ENCODE measurements at regions of chr6 and their contacts with region 1.

Region 1: DNA sequence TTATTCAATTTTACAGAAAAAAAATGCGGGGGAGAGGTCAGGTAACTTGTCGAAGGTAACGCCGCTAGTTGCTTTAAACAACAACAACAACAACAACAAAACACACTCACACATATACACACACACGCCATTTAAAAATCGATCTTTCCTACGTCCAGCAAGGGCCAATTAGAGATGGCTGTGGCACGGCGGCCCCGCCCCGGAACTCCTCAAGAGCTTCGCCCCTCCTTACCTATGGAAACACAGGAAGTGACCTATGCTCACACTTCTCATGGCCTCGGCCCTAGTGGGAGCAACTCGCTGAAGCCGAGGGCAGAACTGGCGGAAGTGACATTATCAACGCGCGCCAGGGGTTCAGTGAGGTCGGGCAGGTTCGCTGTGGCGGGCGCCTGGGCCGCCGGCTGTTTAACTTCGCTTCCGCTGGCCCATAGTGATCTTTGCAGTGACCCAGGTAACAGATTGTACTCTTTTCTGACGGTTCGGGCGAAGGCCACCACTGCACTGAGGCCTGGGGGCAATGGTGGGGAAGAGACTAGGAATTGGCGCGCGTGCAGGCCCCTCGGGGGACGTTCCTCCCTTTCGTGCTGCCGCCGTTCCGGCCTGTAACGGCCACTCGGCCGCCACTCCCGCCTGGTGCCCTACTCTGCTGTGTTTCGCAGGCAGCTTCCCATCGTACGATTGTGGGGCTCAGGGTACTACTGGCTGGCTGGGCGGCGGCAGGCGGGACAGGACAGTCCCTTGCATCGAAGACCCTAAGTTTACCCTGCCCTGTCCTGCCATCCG is at the start of gene TBP:
- DNase-seq: peak; percentile 96 to 99 (median 97)
- H3K4me3 ChIP-seq: peak within 1 kb of the TSS; percentile 63 to 85
- H3K4me3 Mint-ChIP-seq: no peak within 1 kb of the TSS
- H3K27ac ChIP-seq: peak within 1 kb of the TSS; percentile 94
- H3K27ac Mint-ChIP-seq: no peak within 1 kb of the TSS
- H3K4me1 ChIP-seq: peaks cover 53% of the 10 kb centered on the region
- H3K4me1 Mint-ChIP-seq: peaks cover 10 to 37% (median 22%) of the 10 kb centered on the region in 4 donors
- H3K27me3 ChIP-seq: no peaks in the 10 kb centered on the region
- H3K27me3 Mint-ChIP-seq: no peaks in the 10 kb centered on the region
- total RNA-seq, gene TBP: 27.2 to 27.5 TPM

Region 2: GRCh38 chr6:169723200-169723909 is 830.8 kb before region 1 on chr6:
- CTCF ChIA-PET with region 1: no interaction called
- POLR2A ChIA-PET with region 1: interaction called, 23 read pairs
- intact Hi-C with region 1: loop called (anchors 1 kb)
- DNase-seq: peak; percentile 74 to 79 (median 76)
- H3K4me3 ChIP-seq: peak overlapping the region; percentile 76 to 90
- H3K4me3 Mint-ChIP-seq: peak overlapping the region; percentile 89 to 100 (median 96)
- H3K27ac ChIP-seq: peak overlapping the region; percentile 85
- H3K27ac Mint-ChIP-seq: peak overlapping the region; percentile 93 to 99 (median 96)
- H3K4me1 ChIP-seq: peaks cover 49% of the 10 kb centered on the region
- H3K4me1 Mint-ChIP-seq: peaks cover 28 to 55% (median 42%) of the 10 kb centered on the region in 4 donors
- H3K27me3 ChIP-seq: no peaks in the 10 kb centered on the region
- H3K27me3 Mint-ChIP-seq: no peaks in the 10 kb centered on the region

Region 3: DNA sequence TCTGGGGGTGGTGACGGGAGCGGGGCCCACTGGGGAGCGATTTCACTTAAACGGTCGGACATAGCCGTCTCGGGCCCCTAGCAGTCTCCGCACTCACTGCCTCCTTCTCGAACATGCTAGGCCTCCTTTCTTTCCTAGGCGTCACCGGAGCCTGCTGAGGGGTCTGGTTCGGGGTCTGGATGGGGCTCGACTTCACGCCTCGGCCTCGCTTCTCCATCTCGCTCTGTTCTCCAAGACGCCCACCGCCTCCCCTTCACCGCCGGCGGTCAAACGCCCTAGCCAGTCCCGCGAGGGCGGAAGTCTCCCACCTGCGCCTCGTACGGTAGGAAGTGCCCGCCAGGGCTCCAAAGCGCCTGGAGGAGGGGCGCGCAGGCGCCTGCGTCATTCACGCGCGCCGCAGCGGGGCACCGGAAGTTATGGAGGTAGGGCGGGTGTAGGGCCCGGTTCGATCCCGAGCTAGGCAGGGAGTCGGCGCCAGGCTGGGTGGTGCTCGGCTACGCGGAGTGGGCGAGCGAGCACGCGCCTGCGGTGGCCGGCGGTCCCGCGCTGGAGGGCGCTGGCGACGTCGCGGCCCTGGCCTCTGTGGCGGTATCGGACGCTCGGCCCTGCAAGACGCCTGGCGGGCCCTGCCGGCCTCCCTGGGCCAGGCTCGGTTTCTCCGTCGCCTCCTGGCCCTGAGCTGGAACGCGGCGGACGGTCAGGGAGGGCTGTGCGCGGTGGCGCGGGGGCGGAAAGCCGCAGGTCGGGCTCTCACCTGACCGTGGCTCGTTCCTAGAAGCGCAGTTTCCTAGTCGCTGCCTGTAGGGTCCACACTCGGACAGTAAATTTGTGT is 802.7 kb before region 1 on chr6 and contains the starts of genes DYNLT2 and ERMARD:
- CTCF ChIA-PET with region 1: no interaction called
- POLR2A ChIA-PET with region 1: interaction called, 35 read pairs
- intact Hi-C with region 1: loop called (anchors 1 kb)
- DNase-seq: peak; percentile 93 to 96 (median 94)
- H3K4me3 ChIP-seq: peak within 1 kb of the TSS; percentile 80 to 90
- H3K4me3 Mint-ChIP-seq: peak within 1 kb of the TSS; percentile 97 to 100 (median 99)
- H3K27ac ChIP-seq: peak within 1 kb of the TSS; percentile 93
- H3K27ac Mint-ChIP-seq: peak within 1 kb of the TSS; percentile 99 to 100 (median 100)
- H3K4me1 ChIP-seq: peaks cover 24% of the 10 kb centered on the region
- H3K4me1 Mint-ChIP-seq: peaks cover 18 to 39% (median 31%) of the 10 kb centered on the region in 4 donors
- H3K27me3 ChIP-seq: no peaks in the 10 kb centered on the region
- H3K27me3 Mint-ChIP-seq: peaks cover 0 to 1% of the 10 kb centered on the region in 2 donors
- total RNA-seq, gene DYNLT2: 4.6 to 6.9 TPM
- total RNA-seq, gene ERMARD: 33.4 to 41.4 TPM

Region 4: GRCh38 chr6:170344631-170345575 is 209.3 kb before region 1 on chr6:
- CTCF ChIA-PET with region 1: no interaction called
- POLR2A ChIA-PET with region 1: no interaction called
- intact Hi-C with region 1: no loop called
- DNase-seq: no peak
- H3K4me3 ChIP-seq: no peak overlapping the region
- H3K4me3 Mint-ChIP-seq: no peak overlapping the region
- H3K27ac ChIP-seq: no peak overlapping the region
- H3K27ac Mint-ChIP-seq: peak overlapping the region in 2 of 7 donors; percentile 4 to 74
- H3K4me1 ChIP-seq: no peaks in the 10 kb centered on the region
- H3K4me1 Mint-ChIP-seq: peaks cover 9 to 21% (median 17%) of the 10 kb centered on the region in 4 donors
- H3K27me3 ChIP-seq: no peaks in the 10 kb centered on the region
- H3K27me3 Mint-ChIP-seq: no peaks in the 10 kb centered on the region

Region 5: GRCh38 chr6:170584181-170584953 is 30.2 kb after region 1 on chr6 and contains the start of gene PDCD2:
- CTCF ChIA-PET with region 1: interaction called, 4 read pairs
- POLR2A ChIA-PET with region 1: interaction called, 94 read pairs
- intact Hi-C with region 1: loop called (anchors 1 kb)
- DNase-seq: peak; percentile 89 to 94 (median 92)
- H3K4me3 ChIP-seq: peak within 1 kb of the TSS; percentile 71 to 92
- H3K4me3 Mint-ChIP-seq: peak within 1 kb of the TSS; percentile 96 to 98 (median 97)
- H3K27ac ChIP-seq: peak within 1 kb of the TSS; percentile 87
- H3K27ac Mint-ChIP-seq: peak within 1 kb of the TSS; percentile 96 to 99 (median 98)
- H3K4me1 ChIP-seq: peaks cover 27% of the 10 kb centered on the region
- H3K4me1 Mint-ChIP-seq: peaks cover 18 to 46% (median 33%) of the 10 kb centered on the region in 4 donors
- H3K27me3 ChIP-seq: no peaks in the 10 kb centered on the region
- H3K27me3 Mint-ChIP-seq: peaks cover 0 to 3% of the 10 kb centered on the region in 2 donors
- total RNA-seq, gene PDCD2: 75.2 to 78.2 TPM